Activated CD4-positive, alpha-beta T cell treated with anti-CD3 and anti-CD28 coated beads, Interleukin-2, amount 10 ng/mL, durations not matched to agents 7 days and 5 days (primary cell): ENCODE measurements at regions of chr17 and their contacts with region 1.

Region 1: GRCh38 chr17:2202996-2203575 is 100.5 kb downstream of the SMG6 start:
- DNase-seq: no peak
- H3K4me3 Mint-ChIP-seq: peak overlapping the region; percentile 36
- H3K27ac Mint-ChIP-seq: peak overlapping the region; percentile 85
- H3K4me1 Mint-ChIP-seq: peaks cover 45% of the 10 kb centered on the region
- H3K27me3 Mint-ChIP-seq: no peaks in the 10 kb centered on the region

Region 2: DNA sequence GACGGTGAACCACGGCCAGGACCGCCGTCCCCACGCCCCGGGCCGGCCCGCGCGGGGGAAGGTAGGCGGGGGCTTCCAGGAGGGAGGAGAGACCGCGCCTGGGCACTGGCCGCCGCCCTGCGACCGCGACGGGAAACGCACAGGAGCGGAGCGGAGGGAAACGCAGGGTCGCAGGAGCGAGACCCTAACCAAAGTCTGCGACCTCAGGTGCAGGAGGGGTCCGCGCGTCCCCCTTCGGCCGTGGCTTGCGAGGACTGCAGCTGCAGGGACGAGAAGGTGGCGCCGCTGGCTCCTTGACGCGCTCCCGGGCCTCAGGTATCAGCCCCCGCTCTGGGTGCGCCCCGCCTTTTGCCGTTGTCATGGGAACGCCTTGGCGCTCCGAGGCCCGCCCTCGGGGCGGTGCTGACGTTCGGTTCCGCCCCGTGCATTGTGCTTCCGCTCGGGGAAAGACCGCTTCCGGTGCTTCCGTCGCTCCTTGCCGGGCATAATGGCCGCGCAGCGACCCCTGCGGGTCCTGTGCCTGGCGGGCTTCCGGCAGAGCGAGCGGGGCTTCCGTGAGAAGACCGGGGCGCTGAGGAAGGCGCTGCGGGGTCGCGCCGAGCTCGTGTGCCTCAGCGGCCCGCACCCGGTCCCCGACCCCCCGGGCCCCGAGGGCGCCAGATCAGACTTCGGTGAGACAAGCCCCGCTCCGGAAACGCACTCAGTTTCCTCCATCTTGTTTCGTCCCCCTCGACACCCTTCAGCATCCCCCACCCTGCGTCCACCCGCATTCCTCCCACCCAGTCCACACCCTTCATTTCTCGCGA is 161.3 kb before region 1 on chr17 and contains the start of gene OVCA2:
- CTCF ChIA-PET with region 1: no interaction called
- POLR2A ChIA-PET with region 1: no interaction called
- DNase-seq: peak; percentile 98
- H3K4me3 Mint-ChIP-seq: peak within 1 kb of the TSS; percentile 93
- H3K27ac Mint-ChIP-seq: peak within 1 kb of the TSS; percentile 94
- H3K4me1 Mint-ChIP-seq: peaks cover 26% of the 10 kb centered on the region
- H3K27me3 Mint-ChIP-seq: no peaks in the 10 kb centered on the region
- total RNA-seq, gene OVCA2: 36.8 to 37.9 TPM

Region 3: GRCh38 chr17:2215616-2216364 is 12.7 kb after region 1 on chr17:
- CTCF ChIA-PET with region 1: interaction called, 12 read pairs
- POLR2A ChIA-PET with region 1: no interaction called
- DNase-seq: peak; percentile 85
- H3K4me3 Mint-ChIP-seq: peak overlapping the region; percentile 73
- H3K27ac Mint-ChIP-seq: peak overlapping the region; percentile 96
- H3K4me1 Mint-ChIP-seq: peaks cover 63% of the 10 kb centered on the region
- H3K27me3 Mint-ChIP-seq: no peaks in the 10 kb centered on the region

Region 4: DNA sequence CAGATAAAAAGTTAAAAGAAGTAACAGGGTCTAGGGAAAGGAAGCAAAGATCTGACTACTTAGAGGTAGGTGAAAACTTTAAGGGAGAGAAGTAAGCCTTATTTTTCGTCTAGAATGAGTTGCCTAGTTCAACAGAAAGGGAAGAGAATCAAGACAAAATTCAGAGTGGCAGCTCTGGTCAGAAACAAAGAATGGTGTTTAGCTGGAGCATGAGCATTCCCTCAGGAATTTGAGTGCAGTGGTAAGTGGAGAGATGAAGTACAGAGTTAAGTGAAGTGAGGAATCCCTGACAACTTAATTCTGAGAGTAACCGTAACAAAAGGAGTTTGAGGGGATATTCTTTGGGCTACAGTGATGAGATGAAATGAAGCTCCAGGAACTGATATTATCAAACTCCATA is 89.0 kb after region 1 on chr17:
- CTCF ChIA-PET with region 1: no interaction called
- POLR2A ChIA-PET with region 1: no interaction called
- DNase-seq: no peak
- H3K4me3 Mint-ChIP-seq: no peak overlapping the region
- H3K27ac Mint-ChIP-seq: no peak overlapping the region
- H3K4me1 Mint-ChIP-seq: peaks cover 31% of the 10 kb centered on the region
- H3K27me3 Mint-ChIP-seq: no peaks in the 10 kb centered on the region